Ascending aorta (tissue), 2 donors: ENCODE measurements at regions of chr13 and their contacts with region 1.

Region 1: DNA sequence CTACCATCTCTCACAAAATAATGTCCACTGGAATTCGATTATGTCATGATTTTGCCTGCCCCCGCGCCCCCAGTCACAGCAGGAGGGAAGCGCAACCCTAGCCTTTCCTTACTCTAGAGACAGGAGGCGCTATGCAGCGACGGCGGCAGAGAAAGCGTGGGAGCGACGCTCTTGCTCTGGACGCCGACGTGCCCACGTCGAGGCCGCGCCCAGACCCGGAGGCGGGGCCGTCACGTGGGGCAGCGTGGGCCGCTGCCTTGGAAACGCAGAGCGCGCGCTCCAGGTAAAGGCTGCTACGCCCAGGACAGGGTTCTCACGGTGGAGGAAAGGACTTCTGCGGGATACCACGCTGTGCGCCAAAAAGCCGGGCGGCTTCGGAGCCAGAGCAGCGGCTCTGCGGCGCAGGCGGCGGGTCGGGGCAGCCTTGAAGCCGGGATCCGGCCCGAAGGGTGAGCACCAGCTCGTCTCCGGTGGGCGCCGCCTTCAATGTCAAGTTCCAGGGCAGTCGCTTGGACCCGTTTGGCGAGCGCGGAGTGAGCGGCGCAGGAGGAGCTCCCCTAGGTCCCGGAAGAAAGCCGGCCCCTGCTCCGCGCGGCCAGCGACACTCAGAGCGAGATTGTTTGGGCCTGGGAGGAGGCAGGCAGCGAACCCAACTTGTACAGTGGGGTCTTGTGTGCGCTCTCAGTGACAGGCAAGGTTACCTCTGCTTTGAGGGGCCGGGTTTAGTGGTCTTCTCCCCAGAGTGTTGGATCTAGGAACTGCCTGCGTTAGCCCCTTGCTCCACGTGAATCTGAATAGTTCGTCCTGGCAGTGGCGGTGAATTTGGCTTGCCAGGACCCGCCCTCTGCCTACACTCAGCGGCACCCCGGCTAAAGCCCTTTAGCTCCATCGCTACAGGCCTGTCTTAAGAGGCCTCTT is 121.7 kb downstream of the MRPL57 start:
- DNase-seq: peak; percentile 18 to 89
- H3K4me3 ChIP-seq: peak overlapping the region; percentile 88 to 94
- H3K27ac ChIP-seq: peak overlapping the region; percentile 73 to 81
- H3K4me1 ChIP-seq: peaks cover 0 to 6% of the 10 kb centered on the region in 2 donors
- H3K27me3 ChIP-seq: no peaks in the 10 kb centered on the region
- CTCF ChIP-seq: peak; percentile 86 to 88 (median 87)

Region 2: DNA sequence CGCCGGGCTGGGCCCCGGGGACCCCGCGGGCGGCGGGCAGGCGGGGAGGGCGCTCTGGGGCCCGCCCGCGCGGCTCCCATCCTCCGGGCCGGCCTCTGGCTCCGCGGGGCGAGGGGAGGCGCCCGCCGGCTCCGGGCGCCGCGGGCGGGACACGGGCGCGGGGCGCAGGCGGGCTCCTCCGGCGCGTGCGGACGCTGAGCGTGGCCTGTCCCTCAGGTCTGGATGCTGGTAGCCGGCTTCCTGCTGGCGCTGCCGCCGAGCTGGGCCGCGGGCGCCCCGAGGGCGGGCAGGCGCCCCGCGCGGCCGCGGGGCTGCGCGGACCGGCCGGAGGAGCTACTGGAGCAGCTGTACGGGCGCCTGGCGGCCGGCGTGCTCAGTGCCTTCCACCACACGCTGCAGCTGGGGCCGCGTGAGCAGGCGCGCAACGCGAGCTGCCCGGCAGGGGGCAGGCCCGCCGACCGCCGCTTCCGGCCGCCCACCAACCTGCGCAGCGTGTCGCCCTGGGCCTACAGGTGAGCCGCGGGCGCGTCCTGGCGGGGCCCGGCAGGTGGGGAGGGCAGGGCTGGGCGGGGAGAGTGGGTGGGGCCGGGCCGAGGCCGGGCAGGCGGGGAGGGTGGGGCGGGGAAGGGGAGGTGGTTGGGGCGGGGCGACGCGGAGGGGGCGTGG is 594.3 kb before region 1 on chr13:
- intact Hi-C with region 1: loop called (anchors 5 kb)
- DNase-seq: peak in 1 of 2 donors; percentile 84
- H3K4me3 ChIP-seq: peak overlapping the region; percentile 70 to 95
- H3K27ac ChIP-seq: peak overlapping the region in 1 of 2 donors; percentile 38
- H3K4me1 ChIP-seq: peaks cover 3% of the 10 kb centered on the region in 2 donors
- H3K27me3 ChIP-seq: no peaks in the 10 kb centered on the region
- CTCF ChIP-seq: peak; percentile 16 to 81 (median 42)

Region 3: GRCh38 chr13:20940083-20940880 is 357.9 kb before region 1 on chr13:
- intact Hi-C with region 1: loop called (anchors 1 kb)
- DNase-seq: no peak
- H3K4me3 ChIP-seq: no peak overlapping the region
- H3K27ac ChIP-seq: no peak overlapping the region
- H3K4me1 ChIP-seq: no peaks in the 10 kb centered on the region
- H3K27me3 ChIP-seq: no peaks in the 10 kb centered on the region
- CTCF ChIP-seq: no peak

Region 4: DNA sequence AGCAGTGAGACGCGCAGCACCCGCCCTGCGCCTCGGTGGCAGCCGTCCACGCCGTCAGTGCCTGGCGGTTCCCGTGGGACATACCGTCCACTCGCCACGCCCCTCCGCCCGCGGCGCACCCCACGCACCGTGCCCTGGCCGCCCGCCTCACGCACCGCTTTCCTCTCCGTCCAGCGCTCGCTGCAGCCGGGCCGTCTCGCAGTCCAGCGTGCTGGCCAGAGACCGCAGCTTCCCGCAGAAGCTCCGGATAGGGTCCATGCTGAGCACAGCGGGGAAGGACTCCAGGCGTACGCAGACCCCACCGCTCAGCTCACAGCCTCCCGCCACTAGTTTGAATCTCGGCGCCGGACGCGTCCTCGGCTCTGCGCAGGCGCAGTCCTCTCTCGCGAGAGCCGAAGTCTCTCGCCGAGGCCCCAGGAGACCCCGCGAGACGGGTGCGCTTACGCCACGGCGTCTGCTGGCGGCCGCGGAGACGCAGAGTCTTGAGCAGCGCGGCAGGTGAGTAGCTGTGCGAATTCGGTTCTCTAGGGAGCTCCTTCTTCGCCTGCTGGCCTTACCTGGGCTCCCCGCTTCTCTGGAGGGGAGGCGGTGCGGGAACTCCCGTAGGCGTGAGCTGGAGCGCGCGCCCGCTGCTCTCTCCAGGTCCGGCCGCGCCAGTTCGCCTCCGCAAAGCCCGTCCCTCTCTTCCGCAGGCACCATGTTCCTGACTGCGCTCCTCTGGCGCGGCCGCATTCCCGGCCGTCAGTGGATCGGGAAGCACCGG is 121.8 kb before region 1 on chr13 and contains the starts of genes MRPL57 and SKA3:
- intact Hi-C with region 1: loop called (anchors 2 kb)
- DNase-seq: peak; percentile 64 to 93
- H3K4me3 ChIP-seq: peak within 1 kb of the TSS; percentile 82 to 89
- H3K27ac ChIP-seq: peak within 1 kb of the TSS; percentile 94 to 95
- H3K4me1 ChIP-seq: peaks cover 0 to 6% of the 10 kb centered on the region in 2 donors
- H3K27me3 ChIP-seq: no peaks in the 10 kb centered on the region
- CTCF ChIP-seq: peak; percentile 9 to 45 (median 19)
- total RNA-seq, gene MRPL57: 36.7 TPM
- total RNA-seq, gene SKA3: not detected

Region 5: DNA sequence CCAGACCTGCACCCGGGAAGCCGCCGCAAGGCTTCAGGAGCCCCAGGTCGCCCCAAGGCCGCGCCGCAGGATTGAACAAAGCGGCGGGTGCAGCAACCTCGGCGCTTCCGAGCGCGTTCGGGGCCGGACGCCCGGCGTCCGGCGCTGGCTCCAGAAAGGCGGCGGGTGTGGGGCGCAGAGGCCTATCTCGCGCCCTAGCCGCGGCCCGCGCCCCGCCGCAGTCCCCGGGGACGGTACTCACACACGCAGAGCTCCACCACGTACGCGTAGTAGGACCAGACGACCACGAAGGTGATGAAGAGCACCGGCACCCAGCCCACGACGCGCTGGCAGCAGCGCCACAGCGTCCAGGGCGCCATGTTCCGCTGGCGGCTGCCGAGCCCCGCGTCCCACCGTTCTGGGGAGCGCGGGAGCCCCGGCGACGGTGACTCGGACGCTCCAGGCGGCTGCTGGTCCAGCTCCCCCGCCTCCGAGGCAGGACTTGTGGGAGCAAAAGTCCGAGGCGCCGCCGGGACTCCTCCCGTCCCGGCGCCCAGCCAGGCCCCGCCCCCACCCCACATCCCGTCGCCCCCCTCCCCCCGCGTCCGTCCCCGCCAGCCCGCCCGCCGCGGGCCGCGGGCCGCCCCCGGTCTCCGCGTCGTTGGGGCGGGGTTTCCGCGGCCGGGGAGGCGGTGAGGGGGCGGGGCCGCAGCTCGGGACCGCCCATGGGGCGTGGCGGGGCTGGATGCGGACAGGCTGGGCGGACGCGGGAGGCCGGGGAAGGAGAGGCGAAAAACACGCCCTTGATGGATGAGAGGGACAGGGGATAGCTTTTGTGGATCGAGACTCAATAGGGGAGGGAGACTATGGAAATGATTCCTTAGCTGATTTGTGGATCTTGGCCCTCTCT is 160.9 kb after region 1 on chr13 and contains the start of gene ZDHHC20:
- intact Hi-C with region 1: loop called (anchors 1 kb)
- DNase-seq: peak; percentile 59 to 94
- H3K4me3 ChIP-seq: peak within 1 kb of the TSS; percentile 88 to 93
- H3K27ac ChIP-seq: peak within 1 kb of the TSS; percentile 90 to 95
- H3K4me1 ChIP-seq: no peaks in the 10 kb centered on the region
- H3K27me3 ChIP-seq: no peaks in the 10 kb centered on the region
- CTCF ChIP-seq: no peak
- total RNA-seq, gene ZDHHC20: 39.8 TPM

Region 6: GRCh38 chr13:21476893-21477472 is 178.8 kb after region 1 on chr13:
- intact Hi-C with region 1: loop called (anchors 1 kb)
- DNase-seq: peak in 1 of 2 donors; percentile 87
- H3K4me3 ChIP-seq: peak overlapping the region; percentile 24 to 53
- H3K27ac ChIP-seq: no peak overlapping the region
- H3K4me1 ChIP-seq: peaks cover 0 to 4% of the 10 kb centered on the region in 2 donors
- H3K27me3 ChIP-seq: no peaks in the 10 kb centered on the region
- CTCF ChIP-seq: peak; percentile 80 to 93 (median 90)

Region 7: DNA sequence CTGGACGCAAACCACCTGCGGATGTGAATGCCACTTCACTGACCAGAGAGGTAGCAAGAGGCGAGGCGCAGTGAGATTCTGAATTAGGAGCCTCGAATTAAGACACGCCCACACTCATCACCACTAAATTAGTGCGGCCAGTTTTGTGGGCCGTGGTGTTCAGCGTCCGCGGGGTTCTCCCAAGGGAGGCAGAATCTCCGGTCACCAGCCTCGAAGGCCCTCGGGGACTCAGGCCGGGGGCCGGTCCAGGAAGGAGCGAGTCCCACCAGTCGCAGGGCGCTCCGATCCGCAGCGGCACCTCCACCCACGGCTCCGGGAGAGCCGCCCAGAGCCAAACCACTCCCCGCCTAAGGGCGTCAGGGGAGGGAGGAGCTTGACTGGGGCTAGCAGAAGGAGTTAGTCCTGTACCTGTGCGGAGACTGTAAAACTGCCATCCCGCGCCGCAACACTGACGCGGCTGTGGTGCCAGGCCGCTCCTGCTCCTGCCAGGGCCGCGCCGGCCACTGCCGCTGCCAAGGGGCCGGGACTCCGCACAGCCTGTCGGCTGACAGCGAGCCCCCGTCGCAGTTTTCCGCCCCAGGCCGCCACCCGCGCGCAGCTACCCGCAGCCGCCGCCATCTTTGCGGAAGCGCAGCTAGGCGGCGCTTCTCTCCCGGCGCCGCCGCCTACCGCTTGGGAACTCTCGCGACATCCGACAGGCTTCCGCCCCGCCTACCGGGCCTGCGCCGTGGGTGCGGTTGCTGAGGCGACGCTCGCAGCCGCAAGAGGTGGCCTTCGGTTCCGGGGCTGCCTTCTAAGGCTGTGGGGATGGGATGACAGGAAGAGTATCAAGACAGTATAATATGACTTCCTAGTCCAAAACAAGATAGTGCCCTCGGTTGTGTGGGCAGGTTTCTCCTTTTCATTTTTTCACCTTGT is 305.6 kb after region 1 on chr13 and contains the start of gene MICU2:
- intact Hi-C with region 1: loop called (anchors 10 kb)
- DNase-seq: peak; percentile 71 to 95
- H3K4me3 ChIP-seq: peak within 1 kb of the TSS; percentile 73 to 74
- H3K27ac ChIP-seq: peak within 1 kb of the TSS; percentile 79 to 94
- H3K4me1 ChIP-seq: peaks cover 0 to 5% of the 10 kb centered on the region in 2 donors
- H3K27me3 ChIP-seq: no peaks in the 10 kb centered on the region
- CTCF ChIP-seq: peak in 1 of 3 experiments; percentile 37
- total RNA-seq, gene MICU2: 41.5 TPM